ENCODE measurements at regions of chr2 and their contacts with region 1.

Region 1: GRCh38 chr2:43943809-43944452 is 51.9 kb downstream of the LRPPRC start:
- DNase-seq: no peak
- ATAC-seq: no peak
- H3K4me3 ChIP-seq: no peak overlapping the region
- H3K4me3 Mint-ChIP-seq: no peak overlapping the region
- H3K27ac ChIP-seq: no peak overlapping the region
- H3K27ac Mint-ChIP-seq: no peak overlapping the region
- H3K4me1 ChIP-seq: no peaks in the 10 kb centered on the region
- H3K4me1 Mint-ChIP-seq: peaks cover 0 to 5% (median 0%) of the 10 kb centered on the region in 7 donors
- H3K27me3 ChIP-seq: no peaks in the 10 kb centered on the region
- H3K27me3 Mint-ChIP-seq: no peaks in the 10 kb centered on the region

Region 2: GRCh38 chr2:43803113-43803512 is 140.8 kb before region 1 on chr2:
- CTCF ChIA-PET with region 1: no interaction called
- POLR2A ChIA-PET with region 1: no interaction called
- intact Hi-C with region 1: no loop called
- DNase-seq: no peak
- ATAC-seq: no peak
- H3K4me3 ChIP-seq: no peak overlapping the region
- H3K4me3 Mint-ChIP-seq: no peak overlapping the region
- H3K27ac ChIP-seq: no peak overlapping the region
- H3K27ac Mint-ChIP-seq: no peak overlapping the region
- H3K4me1 ChIP-seq: no peaks in the 10 kb centered on the region
- H3K4me1 Mint-ChIP-seq: no peaks in the 10 kb centered on the region
- H3K27me3 ChIP-seq: no peaks in the 10 kb centered on the region
- H3K27me3 Mint-ChIP-seq: no peaks in the 10 kb centered on the region

Region 3: DNA sequence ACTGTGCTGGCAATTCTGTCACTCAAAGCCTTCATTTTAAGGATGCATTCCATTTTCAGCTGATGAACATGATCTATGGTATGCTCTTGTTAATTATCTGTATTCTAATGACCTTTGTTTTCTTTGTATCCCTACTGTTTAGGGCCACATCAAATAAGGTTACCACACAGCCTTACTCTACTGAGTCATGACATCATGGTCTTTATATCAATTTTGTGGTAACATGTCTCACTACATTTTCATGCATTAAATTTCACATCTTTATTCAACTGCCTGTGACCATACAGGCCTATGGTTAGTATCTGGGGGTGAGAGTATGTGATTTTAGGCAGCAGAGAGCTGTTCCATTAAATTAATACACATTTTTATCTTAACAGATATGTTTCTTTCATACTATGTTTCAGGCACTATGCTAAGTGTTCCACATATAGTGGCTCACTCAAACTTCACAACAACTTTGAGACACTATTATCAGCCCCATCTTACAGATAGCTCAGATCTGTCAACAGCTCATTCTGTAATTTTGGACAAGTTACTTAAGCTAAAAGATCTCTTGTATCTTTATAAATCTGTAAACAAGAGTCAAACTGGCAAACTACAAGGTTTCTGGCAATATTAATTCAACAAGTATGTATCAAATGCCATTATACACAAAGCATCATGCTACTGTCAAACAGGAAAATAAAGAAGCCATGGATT is 33.9 kb after region 1 on chr2:
- CTCF ChIA-PET with region 1: no interaction called
- POLR2A ChIA-PET with region 1: no interaction called
- intact Hi-C with region 1: loop called in 1 of 2 experiments (anchors 5 kb)
- DNase-seq: no peak
- ATAC-seq: no peak
- H3K4me3 ChIP-seq: no peak overlapping the region
- H3K4me3 Mint-ChIP-seq: no peak overlapping the region
- H3K27ac ChIP-seq: no peak overlapping the region
- H3K27ac Mint-ChIP-seq: no peak overlapping the region
- H3K4me1 ChIP-seq: no peaks in the 10 kb centered on the region
- H3K4me1 Mint-ChIP-seq: peaks cover 0 to 12% (median 0%) of the 10 kb centered on the region in 7 donors
- H3K27me3 ChIP-seq: no peaks in the 10 kb centered on the region
- H3K27me3 Mint-ChIP-seq: no peaks in the 10 kb centered on the region